ENCODE measurements at regions of chr9 and their contacts with region 1.

Region 1: DNA sequence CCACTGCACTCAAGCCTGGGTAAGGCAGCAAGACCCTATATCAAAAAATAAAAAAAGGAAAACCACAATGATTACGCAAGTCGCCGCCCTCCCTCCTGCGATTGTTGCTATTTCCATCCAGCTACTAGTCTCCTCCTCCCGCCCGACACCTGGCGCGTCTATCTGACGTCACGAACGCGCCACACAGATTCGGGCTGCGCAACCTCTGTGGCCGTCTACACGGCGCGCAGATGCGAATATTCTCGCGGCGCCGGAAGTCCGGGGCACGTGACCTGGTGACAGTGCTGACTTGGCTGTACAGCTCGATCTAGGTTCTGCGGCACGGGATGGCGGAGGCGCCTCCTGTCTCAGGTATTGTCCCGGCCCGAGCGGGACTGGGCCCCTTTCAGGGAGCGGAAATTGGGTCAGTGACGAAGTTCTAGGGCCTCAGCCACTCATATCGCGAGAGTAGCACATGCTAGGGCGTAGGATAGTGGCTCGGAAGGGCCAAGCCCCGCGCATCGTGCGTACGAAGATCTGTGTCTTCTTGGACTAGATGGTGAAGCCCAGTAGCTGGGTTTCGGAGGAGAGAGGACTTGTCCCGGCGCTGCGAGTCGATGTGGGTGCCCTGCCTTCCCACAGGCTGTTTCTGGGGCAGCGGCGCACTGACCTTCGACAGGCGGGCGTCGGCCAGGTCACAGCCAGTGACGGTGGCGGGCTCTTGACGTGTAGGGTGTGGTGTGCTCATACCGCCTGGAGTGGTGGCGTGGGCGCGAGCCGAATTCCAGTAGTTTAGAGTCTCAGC is at the start of gene NFX1:
- DNase-seq: peak; percentile 94 to 100 (median 99)
- ATAC-seq: peak; percentile 89
- H3K4me3 ChIP-seq: peak within 1 kb of the TSS; percentile 76
- H3K4me3 Mint-ChIP-seq: peak within 1 kb of the TSS; percentile 83 to 99 (median 94)
- H3K27ac ChIP-seq: peak within 1 kb of the TSS; percentile 93
- H3K27ac Mint-ChIP-seq: peak within 1 kb of the TSS; percentile 96 to 100 (median 99)
- H3K4me1 ChIP-seq: peaks cover 11 to 49% of the 10 kb centered on the region in 2 donors
- H3K4me1 Mint-ChIP-seq: peaks cover 36 to 72% (median 58%) of the 10 kb centered on the region in 7 donors
- H3K27me3 ChIP-seq: no peaks in the 10 kb centered on the region
- H3K27me3 Mint-ChIP-seq: peaks cover 0 to 4% (median 0%) of the 10 kb centered on the region in 5 donors
- total RNA-seq, gene NFX1: 39.8 to 65.4 (median 43.6) TPM

Region 2: GRCh38 chr9:33024966-33025571 is 265.4 kb before region 1 on chr9 and contains the start of gene DNAJA1:
- CTCF ChIA-PET with region 1: no interaction called
- POLR2A ChIA-PET with region 1: interaction called, 20 read pairs
- intact Hi-C with region 1: loop called (anchors 1 kb)
- DNase-seq: peak; percentile 92 to 99 (median 97)
- ATAC-seq: peak; percentile 91
- H3K4me3 ChIP-seq: peak within 1 kb of the TSS; percentile 98
- H3K4me3 Mint-ChIP-seq: peak within 1 kb of the TSS; percentile 91 to 99 (median 96)
- H3K27ac ChIP-seq: peak within 1 kb of the TSS; percentile 100
- H3K27ac Mint-ChIP-seq: peak within 1 kb of the TSS; percentile 82 to 98 (median 95)
- H3K4me1 ChIP-seq: peaks cover 37 to 49% of the 10 kb centered on the region in 2 donors
- H3K4me1 Mint-ChIP-seq: peaks cover 51 to 83% (median 78%) of the 10 kb centered on the region in 7 donors
- H3K27me3 ChIP-seq: no peaks in the 10 kb centered on the region
- H3K27me3 Mint-ChIP-seq: no peaks in the 10 kb centered on the region
- total RNA-seq, gene DNAJA1: 66.8 to 204 (median 119) TPM

Region 3: DNA sequence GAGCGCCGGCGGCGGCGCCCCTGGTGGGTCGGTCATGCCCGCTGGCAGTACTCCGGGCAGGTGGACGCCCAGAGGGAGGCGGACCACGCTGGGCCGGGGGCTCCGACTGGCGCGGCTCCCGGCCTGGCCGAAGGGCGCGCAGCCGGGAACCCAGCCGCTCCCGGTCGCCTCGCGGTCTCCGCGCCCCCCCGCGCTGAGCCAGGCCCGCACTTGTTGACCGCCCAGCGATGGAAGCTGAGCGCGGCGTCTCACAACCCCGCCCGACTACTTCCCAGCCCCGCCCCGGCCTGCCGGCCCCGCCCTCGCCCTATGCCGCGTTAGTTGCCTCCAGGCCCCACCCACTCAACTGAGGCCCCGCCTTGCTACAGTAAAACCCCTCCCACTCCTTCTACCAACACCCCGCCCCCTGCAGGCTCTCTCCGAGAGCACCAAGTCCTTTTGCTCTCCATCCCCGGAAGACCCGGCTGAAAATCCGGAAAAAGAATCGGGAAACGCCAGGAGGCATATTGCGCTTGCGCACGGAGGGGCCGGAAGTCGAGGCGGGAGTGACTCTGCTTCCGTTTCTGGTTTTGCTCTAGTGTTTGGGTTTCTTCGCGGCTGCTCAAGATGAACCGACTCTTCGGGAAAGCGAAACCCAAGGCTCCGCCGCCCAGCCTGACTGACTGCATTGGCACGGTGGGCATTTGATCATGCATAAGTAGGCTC is 25.8 kb before region 1 on chr9 and contains the starts of genes BAG1 and CHMP5:
- CTCF ChIA-PET with region 1: interaction called, 6 read pairs
- POLR2A ChIA-PET with region 1: interaction called, 29 read pairs
- intact Hi-C with region 1: loop called (anchors 1 kb)
- DNase-seq: peak; percentile 98 to 100 (median 100)
- ATAC-seq: peak; percentile 99
- H3K4me3 ChIP-seq: peak within 1 kb of the TSS; percentile 95
- H3K4me3 Mint-ChIP-seq: peak within 1 kb of the TSS; percentile 82 to 98 (median 92)
- H3K27ac ChIP-seq: peak within 1 kb of the TSS; percentile 88
- H3K27ac Mint-ChIP-seq: peak within 1 kb of the TSS; percentile 84 to 99 (median 97)
- H3K4me1 ChIP-seq: peaks cover 15 to 34% of the 10 kb centered on the region in 2 donors
- H3K4me1 Mint-ChIP-seq: peaks cover 36 to 66% (median 55%) of the 10 kb centered on the region in 7 donors
- H3K27me3 ChIP-seq: no peaks in the 10 kb centered on the region
- H3K27me3 Mint-ChIP-seq: peaks cover 0 to 2% (median 0%) of the 10 kb centered on the region in 5 donors
- total RNA-seq, gene BAG1: 48.6 to 77.2 (median 61.0) TPM
- total RNA-seq, gene CHMP5: 21.4 to 74.6 (median 35.3) TPM

Region 4: GRCh38 chr9:33374634-33375213 is 84.3 kb after region 1 on chr9:
- CTCF ChIA-PET with region 1: interaction called, 4 read pairs
- POLR2A ChIA-PET with region 1: interaction called, 3 read pairs
- intact Hi-C with region 1: loop called in 1 of 2 experiments (anchors 1 kb)
- DNase-seq: peak; percentile 29 to 76 (median 70)
- ATAC-seq: peak; percentile 94
- H3K4me3 ChIP-seq: no peak overlapping the region
- H3K4me3 Mint-ChIP-seq: peak overlapping the region in 9 of 10 donors; percentile 19 to 81 (median 75)
- H3K27ac ChIP-seq: peak overlapping the region; percentile 0
- H3K27ac Mint-ChIP-seq: peak overlapping the region in 8 of 9 donors; percentile 49 to 87 (median 76)
- H3K4me1 ChIP-seq: peaks cover 0 to 5% of the 10 kb centered on the region in 2 donors
- H3K4me1 Mint-ChIP-seq: peaks cover 10 to 17% (median 13%) of the 10 kb centered on the region in 7 donors
- H3K27me3 ChIP-seq: no peaks in the 10 kb centered on the region
- H3K27me3 Mint-ChIP-seq: no peaks in the 10 kb centered on the region

Region 5: DNA sequence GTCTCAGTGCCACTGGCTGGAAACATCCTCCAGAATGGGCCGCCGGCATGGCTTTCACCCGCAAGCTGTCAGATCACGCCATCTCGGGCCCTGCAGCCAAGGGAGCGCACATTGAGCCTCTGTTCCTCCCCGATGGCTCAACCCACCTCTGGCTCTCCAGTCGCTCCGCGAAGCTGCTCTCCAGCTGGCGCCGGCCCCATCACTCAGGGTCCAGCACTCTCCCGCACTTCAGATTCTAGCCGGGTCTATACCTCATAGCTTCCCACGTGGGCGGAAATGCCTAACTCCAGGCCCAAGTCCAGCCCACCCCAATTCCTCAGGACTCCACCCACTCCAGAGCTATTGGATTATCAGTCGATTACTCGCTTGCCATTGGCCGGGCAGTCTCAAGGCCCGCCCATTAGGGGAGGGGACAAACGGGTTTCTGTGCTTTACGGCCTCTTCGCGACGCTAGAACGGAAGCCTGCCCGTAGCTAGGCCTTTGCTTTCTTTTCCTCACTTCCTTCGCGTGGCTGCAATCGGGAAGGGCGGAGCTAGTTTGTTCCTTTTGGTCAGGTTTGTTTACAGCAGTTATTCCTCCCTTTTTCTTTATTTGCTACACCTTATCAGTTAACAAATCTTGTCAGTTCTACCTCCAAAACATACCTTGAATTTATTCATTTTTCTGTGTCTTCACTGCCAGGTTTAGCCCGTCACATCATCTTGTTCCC is 183.4 kb after region 1 on chr9 and contains the start of gene NOL6:
- CTCF ChIA-PET with region 1: interaction called, 3 read pairs
- POLR2A ChIA-PET with region 1: interaction called, 17 read pairs
- intact Hi-C with region 1: loop called (anchors 1 kb)
- DNase-seq: peak; percentile 91 to 99 (median 98)
- ATAC-seq: peak; percentile 100
- H3K4me3 ChIP-seq: peak within 1 kb of the TSS; percentile 88
- H3K4me3 Mint-ChIP-seq: peak within 1 kb of the TSS; percentile 88 to 100 (median 97)
- H3K27ac ChIP-seq: peak within 1 kb of the TSS; percentile 78
- H3K27ac Mint-ChIP-seq: peak within 1 kb of the TSS; percentile 88 to 99 (median 96)
- H3K4me1 ChIP-seq: peaks cover 13 to 19% of the 10 kb centered on the region in 2 donors
- H3K4me1 Mint-ChIP-seq: peaks cover 9 to 38% (median 31%) of the 10 kb centered on the region in 7 donors
- H3K27me3 ChIP-seq: no peaks in the 10 kb centered on the region
- H3K27me3 Mint-ChIP-seq: no peaks in the 10 kb centered on the region
- total RNA-seq, gene NOL6: 34.0 to 48.0 (median 44.0) TPM

Region 6: GRCh38 chr9:33489066-33489465 is 198.6 kb after region 1 on chr9:
- CTCF ChIA-PET with region 1: no interaction called
- POLR2A ChIA-PET with region 1: no interaction called
- intact Hi-C with region 1: no loop called
- DNase-seq: no peak
- ATAC-seq: no peak
- H3K4me3 ChIP-seq: no peak overlapping the region
- H3K4me3 Mint-ChIP-seq: no peak overlapping the region
- H3K27ac ChIP-seq: no peak overlapping the region
- H3K27ac Mint-ChIP-seq: no peak overlapping the region
- H3K4me1 ChIP-seq: no peaks in the 10 kb centered on the region
- H3K4me1 Mint-ChIP-seq: no peaks in the 10 kb centered on the region
- H3K27me3 ChIP-seq: no peaks in the 10 kb centered on the region
- H3K27me3 Mint-ChIP-seq: peaks cover 0 to 19% (median 0%) of the 10 kb centered on the region in 5 donors

Region 7: GRCh38 chr9:33633636-33634035 is 343.2 kb after region 1 on chr9:
- CTCF ChIA-PET with region 1: no interaction called
- POLR2A ChIA-PET with region 1: no interaction called
- intact Hi-C with region 1: no loop called
- DNase-seq: no peak
- ATAC-seq: no peak
- H3K4me3 ChIP-seq: no peak overlapping the region
- H3K4me3 Mint-ChIP-seq: no peak overlapping the region
- H3K27ac ChIP-seq: no peak overlapping the region
- H3K27ac Mint-ChIP-seq: no peak overlapping the region
- H3K4me1 ChIP-seq: no peaks in the 10 kb centered on the region
- H3K4me1 Mint-ChIP-seq: peaks cover 0 to 6% (median 0%) of the 10 kb centered on the region in 7 donors
- H3K27me3 ChIP-seq: peaks cover 0 to 3% of the 10 kb centered on the region in 2 donors
- H3K27me3 Mint-ChIP-seq: peaks cover 53 to 71% (median 65%) of the 10 kb centered on the region in 5 donors

Region 8: DNA sequence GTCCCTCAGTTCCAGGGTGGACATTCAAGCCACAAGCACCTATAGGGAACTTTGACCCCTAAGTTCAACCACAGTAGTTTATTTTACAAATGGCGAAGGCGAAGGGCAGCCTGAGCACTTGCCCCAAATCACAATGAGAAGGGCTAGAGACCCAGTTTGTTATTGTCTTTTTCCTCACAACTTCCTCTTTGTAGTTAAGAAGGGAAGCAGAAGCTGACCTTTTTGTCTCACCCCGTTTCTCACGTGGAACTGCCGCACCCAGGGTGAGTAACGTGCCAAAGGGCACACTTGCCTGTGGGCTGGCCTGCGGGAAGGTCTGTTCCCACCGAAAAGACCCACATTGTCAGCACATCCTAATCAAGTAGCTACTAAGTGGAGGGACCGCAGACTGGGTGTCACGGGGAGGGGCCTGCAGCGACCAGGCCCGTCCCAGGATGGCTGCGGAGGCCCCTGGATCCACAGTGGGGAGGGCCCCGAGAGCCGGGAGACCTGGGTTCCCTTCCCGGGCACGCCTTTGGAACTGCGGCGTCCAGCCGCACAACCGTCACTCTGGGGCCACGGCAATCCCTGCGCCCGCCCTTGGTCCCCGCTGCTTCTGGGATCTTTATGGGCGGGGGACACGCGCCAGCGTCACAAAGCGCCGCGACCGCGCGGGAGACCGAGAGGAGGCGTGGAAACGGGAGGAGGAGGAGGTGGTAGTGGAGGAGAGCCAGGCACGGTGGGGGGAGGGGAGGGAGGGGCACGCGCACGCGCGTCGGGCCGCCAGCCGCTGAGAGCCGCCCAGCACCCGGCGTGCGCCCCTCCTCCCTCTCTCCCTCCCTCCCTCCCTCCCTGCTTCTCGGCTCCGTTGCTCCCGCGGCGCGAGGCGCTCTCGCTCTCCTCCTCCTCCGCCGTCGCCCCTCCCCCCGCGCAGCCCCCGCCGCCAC is 526.2 kb after region 1 on chr9 and contains the start of gene UBE2R2:
- CTCF ChIA-PET with region 1: no interaction called
- POLR2A ChIA-PET with region 1: no interaction called
- intact Hi-C with region 1: loop called in 1 of 2 experiments (anchors 1 kb)
- DNase-seq: peak; percentile 81 to 94 (median 90)
- ATAC-seq: peak; percentile 86
- H3K4me3 ChIP-seq: peak within 1 kb of the TSS; percentile 88
- H3K4me3 Mint-ChIP-seq: peak within 1 kb of the TSS; percentile 83 to 98 (median 93)
- H3K27ac ChIP-seq: peak within 1 kb of the TSS; percentile 96
- H3K27ac Mint-ChIP-seq: peak within 1 kb of the TSS; percentile 91 to 99 (median 97)
- H3K4me1 ChIP-seq: peaks cover 19 to 21% of the 10 kb centered on the region in 2 donors
- H3K4me1 Mint-ChIP-seq: peaks cover 24 to 60% (median 54%) of the 10 kb centered on the region in 7 donors
- H3K27me3 ChIP-seq: no peaks in the 10 kb centered on the region
- H3K27me3 Mint-ChIP-seq: no peaks in the 10 kb centered on the region
- total RNA-seq, gene UBE2R2: 27.2 to 40.8 (median 32.0) TPM